ENCODE measurements at regions of chr13 and their contacts with region 1.

Region 1: DNA sequence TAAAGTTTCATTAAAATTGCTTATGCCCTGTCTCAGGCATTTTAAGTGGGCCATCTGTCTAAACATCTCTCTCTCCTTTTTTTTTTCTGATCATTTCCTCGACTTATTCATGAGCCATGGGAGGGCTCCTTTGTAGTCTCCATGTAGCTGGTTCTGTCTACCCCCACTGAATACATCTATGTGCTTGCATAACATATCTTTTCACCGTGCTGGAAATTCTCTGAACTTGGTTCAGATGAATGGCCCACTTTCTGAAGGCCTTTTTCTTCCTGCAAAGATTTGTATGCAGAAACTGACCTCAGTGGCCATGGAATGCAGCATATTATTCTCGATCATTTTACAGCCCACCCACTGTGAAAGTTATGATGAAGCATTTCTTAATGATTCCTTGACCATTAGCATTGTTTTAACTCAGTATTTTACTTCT is 225.3 kb downstream of the GGACT start:
- DNase-seq: peak; percentile 13
- H3K4me3 ChIP-seq: no peak overlapping the region
- H3K27ac ChIP-seq: no peak overlapping the region
- H3K4me1 ChIP-seq: peaks cover 12% of the 10 kb centered on the region
- H3K27me3 ChIP-seq: no peaks in the 10 kb centered on the region
- CTCF ChIP-seq: no peak
- POLR2A ChIP-seq: no peak

Region 2: GRCh38 chr13:101397742-101398141 is 1034.4 kb after region 1 on chr13:
- CTCF ChIA-PET with region 1: no interaction called
- POLR2A ChIA-PET with region 1: no interaction called
- dilution Hi-C with region 1: no loop called
- intact Hi-C with region 1: loop called (anchors 5 kb)
- DNase-seq: peak; percentile 59
- H3K4me3 ChIP-seq: no peak overlapping the region
- H3K27ac ChIP-seq: no peak overlapping the region
- H3K4me1 ChIP-seq: peaks cover 15% of the 10 kb centered on the region
- H3K27me3 ChIP-seq: no peaks in the 10 kb centered on the region
- CTCF ChIP-seq: no peak
- POLR2A ChIP-seq: no peak

Measured in endothelial cell of umbilical vein (primary cell).